ENCODE measurements at regions of chr12 and their contacts with region 1.

Region 1: GRCh38 chr12:57546438-57547383 is at the start of gene DCTN2:
- DNase-seq: peak; percentile 95
- ATAC-seq: peak; percentile 99
- total RNA-seq, gene DCTN2: 92.5 TPM

Region 2: GRCh38 chr12:57487597-57488401 is 58.9 kb before region 1 on chr12 and contains the start of gene MARS1:
- intact Hi-C with region 1: loop called (anchors 5 kb)
- DNase-seq: peak; percentile 98
- ATAC-seq: peak; percentile 98
- total RNA-seq, gene MARS1: 89.7 TPM